H1 (cell line): ENCODE measurements at regions of chr7 and their contacts with region 1.

Region 1: GRCh38 chr7:157474689-157475088 is 137.9 kb downstream of the DNAJB6 start:
- DNase-seq: peak; percentile 46 to 88
- H3K4me3 ChIP-seq: no peak overlapping the region
- H3K27ac ChIP-seq: no peak overlapping the region
- H3K4me1 ChIP-seq: 0 out of 7 replicates have a peak, but pooled peaks cover 0 to 3% (median 0%) of the 10 kb centered on the region in 4 experiments
- H3K27me3 ChIP-seq: no peaks in the 10 kb centered on the region; a peak in 1 of 7 replicates
- CTCF ChIP-seq: peak; percentile 69 to 84 (median 78)
- EP300 ChIP-seq: no peak
- POLR2A ChIP-seq: no peak
- RAD21 ChIP-seq: peak; percentile 51 to 64

Region 2: GRCh38 chr7:157404845-157405481 is 69.7 kb before region 1 on chr7:
- CTCF ChIA-PET with region 1: no interaction called
- POLR2A ChIA-PET with region 1: no interaction called
- DNase-seq: no peak
- H3K4me3 ChIP-seq: no peak overlapping the region
- H3K27ac ChIP-seq: no peak overlapping the region
- H3K4me1 ChIP-seq: peaks cover 0 to 3% (median 0%) of the 10 kb centered on the region in 4 experiments; a peak in 2 of 7 replicates
- H3K27me3 ChIP-seq: no peaks in the 10 kb centered on the region
- CTCF ChIP-seq: no peak
- EP300 ChIP-seq: no peak
- POLR2A ChIP-seq: no peak
- RAD21 ChIP-seq: no peak

Region 3: DNA sequence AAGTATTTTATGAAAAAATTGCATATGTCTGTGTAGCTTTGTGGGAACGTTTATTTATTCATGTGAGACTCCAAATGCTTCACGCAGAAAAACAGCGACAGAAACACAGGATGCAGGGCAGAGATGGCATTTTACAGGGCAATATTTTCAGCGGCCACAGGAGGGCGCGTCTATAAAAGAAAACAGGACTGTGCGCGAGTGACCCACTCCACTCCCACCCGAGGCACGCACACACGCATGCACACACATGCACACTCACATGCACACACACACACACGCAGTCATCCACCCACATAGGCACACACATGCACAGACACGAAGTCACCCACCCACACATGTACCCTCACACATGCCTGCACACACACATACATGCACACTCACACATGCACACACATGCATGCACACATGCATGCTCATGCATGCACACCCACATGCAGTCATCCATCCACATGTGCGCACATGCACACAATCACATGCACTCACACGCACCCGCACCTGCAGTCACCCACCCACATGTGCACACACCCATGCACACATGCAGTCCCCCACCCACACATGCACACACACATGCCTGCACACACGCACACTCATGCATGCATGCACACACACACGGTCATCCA is 41.6 kb before region 1 on chr7:
- CTCF ChIA-PET with region 1: interaction called, 22 read pairs
- POLR2A ChIA-PET with region 1: interaction called, 3 read pairs
- DNase-seq: peak in 1 of 2 experiments; percentile 77
- H3K4me3 ChIP-seq: peak overlapping the region in 1 of 4 experiments; percentile 49; a peak in 3 of 8 replicates
- H3K27ac ChIP-seq: no peak overlapping the region
- H3K4me1 ChIP-seq: peaks cover 0 to 11% (median 7%) of the 10 kb centered on the region in 4 experiments; a peak in 6 of 7 replicates
- H3K27me3 ChIP-seq: no peaks in the 10 kb centered on the region
- CTCF ChIP-seq: peak in 2 of 3 experiments; percentile 67 to 74; a peak in 3 of 4 replicates
- EP300 ChIP-seq: peak in 1 of 2 experiments; percentile 12; a peak in 1 of 3 replicates
- POLR2A ChIP-seq: no peak
- RAD21 ChIP-seq: peak; percentile 74 to 77

Region 4: DNA sequence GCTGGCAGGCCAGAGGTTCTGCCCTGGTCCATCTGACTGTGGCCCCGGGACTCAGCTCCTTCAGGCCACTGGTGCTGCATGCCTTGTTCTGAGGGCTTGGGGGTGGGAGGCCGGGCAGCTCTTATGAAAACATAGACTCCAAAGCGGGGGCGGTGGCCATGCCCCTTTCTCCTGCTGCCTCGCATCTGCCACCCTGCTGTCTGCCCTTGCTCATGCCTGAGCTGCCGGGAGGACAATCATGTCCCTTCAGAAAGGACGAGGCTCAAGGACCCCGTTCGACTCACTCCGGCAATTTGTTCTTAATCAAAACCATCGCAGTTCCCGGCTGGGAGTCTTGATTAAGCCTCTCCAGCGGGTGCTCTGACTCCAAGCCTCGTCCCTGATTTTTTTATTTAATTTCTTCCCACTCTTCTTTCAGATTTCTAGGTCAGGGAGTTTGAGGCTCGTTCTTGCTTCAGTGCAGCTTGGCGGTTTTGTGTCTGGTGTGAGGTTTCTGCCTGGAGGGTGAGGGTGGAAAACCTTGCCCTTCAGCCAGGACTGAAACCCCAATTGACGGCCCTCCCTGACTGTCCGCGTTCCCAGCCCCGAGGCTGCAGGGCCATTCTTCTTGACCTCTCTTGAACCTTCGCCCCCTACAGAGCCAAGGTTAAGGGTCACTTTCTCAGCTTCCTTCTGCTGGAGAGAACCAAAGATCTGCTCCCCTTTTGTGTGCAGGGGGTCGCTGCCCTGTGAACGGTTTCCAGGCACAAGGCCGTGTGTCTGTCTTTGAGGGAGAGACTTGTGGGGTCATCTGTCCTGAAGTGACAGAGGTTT is 17.0 kb before region 1 on chr7:
- CTCF ChIA-PET with region 1: interaction called, 12 read pairs
- POLR2A ChIA-PET with region 1: no interaction called
- DNase-seq: peak in 1 of 2 experiments; percentile 42
- H3K4me3 ChIP-seq: no peak overlapping the region
- H3K27ac ChIP-seq: no peak overlapping the region
- H3K4me1 ChIP-seq: peaks cover 0 to 3% (median 0%) of the 10 kb centered on the region in 4 experiments; a peak in 1 of 7 replicates
- H3K27me3 ChIP-seq: no peaks in the 10 kb centered on the region; a peak in 3 of 7 replicates
- CTCF ChIP-seq: no peak
- EP300 ChIP-seq: no peak
- POLR2A ChIP-seq: no peak
- RAD21 ChIP-seq: no peak

Region 5: GRCh38 chr7:157485361-157485831 is 10.7 kb after region 1 on chr7:
- CTCF ChIA-PET with region 1: interaction called, 26 read pairs
- POLR2A ChIA-PET with region 1: no interaction called
- DNase-seq: no peak
- H3K4me3 ChIP-seq: no peak overlapping the region
- H3K27ac ChIP-seq: no peak overlapping the region
- H3K4me1 ChIP-seq: no peaks in the 10 kb centered on the region
- H3K27me3 ChIP-seq: peaks cover 0 to 3% (median 0%) of the 10 kb centered on the region in 4 experiments; a peak in 1 of 7 replicates
- CTCF ChIP-seq: no peak
- EP300 ChIP-seq: no peak
- POLR2A ChIP-seq: no peak
- RAD21 ChIP-seq: 0 out of 4 replicates have a peak, but pooled peaks of 1 of the 2 experiments have one; percentile 1

Region 6: GRCh38 chr7:157490457-157490912 is 15.8 kb after region 1 on chr7:
- CTCF ChIA-PET with region 1: interaction called, 26 read pairs
- POLR2A ChIA-PET with region 1: no interaction called
- DNase-seq: no peak
- H3K4me3 ChIP-seq: no peak overlapping the region
- H3K27ac ChIP-seq: no peak overlapping the region
- H3K4me1 ChIP-seq: no peaks in the 10 kb centered on the region
- H3K27me3 ChIP-seq: no peaks in the 10 kb centered on the region
- CTCF ChIP-seq: no peak
- EP300 ChIP-seq: no peak
- POLR2A ChIP-seq: no peak
- RAD21 ChIP-seq: no peak

Region 7: DNA sequence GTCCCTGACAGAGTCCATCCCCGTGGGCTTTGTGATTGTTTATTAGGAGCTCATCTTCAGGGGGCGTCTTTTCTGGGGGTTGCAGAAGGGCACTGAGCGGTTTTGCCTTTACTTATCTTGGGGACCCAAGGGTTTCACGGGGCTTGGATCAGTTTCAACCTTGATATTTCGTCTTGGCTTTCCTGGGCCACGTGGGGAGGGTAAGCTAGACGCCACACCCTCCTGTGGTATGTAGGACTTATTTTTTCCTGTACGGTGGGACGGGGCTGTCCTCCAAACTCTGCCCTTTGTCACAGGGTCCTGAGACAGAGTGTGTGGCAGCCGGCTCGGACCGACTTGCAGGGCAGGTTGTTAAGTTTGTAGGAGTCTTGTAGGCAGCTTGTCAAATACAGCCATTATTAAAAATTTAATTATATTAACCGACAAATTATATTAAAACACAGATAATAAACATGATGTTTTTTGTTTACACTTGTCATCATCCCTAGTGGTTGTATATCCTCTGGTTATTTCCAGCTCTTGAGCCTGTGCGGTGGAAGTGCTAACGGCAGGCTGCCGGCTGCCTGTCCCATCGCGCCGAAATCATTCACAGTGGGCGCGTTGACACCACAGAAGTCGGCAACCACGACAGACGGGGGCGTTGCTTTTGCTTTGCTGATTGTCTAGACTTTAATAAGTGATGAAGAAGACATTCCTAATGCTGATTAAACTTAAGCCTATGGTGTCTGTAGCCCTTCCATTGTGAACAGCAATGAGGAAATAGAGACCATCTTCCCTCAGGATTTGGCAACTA is 55.3 kb after region 1 on chr7:
- CTCF ChIA-PET with region 1: interaction called, 11 read pairs
- POLR2A ChIA-PET with region 1: no interaction called
- DNase-seq: peak in 1 of 2 experiments; percentile 7
- H3K4me3 ChIP-seq: no peak overlapping the region
- H3K27ac ChIP-seq: no peak overlapping the region
- H3K4me1 ChIP-seq: no peaks in the 10 kb centered on the region; a peak in 2 of 7 replicates
- H3K27me3 ChIP-seq: no peaks in the 10 kb centered on the region; a peak in 1 of 7 replicates
- CTCF ChIP-seq: no peak
- EP300 ChIP-seq: no peak
- POLR2A ChIP-seq: no peak
- RAD21 ChIP-seq: no peak

Region 8: DNA sequence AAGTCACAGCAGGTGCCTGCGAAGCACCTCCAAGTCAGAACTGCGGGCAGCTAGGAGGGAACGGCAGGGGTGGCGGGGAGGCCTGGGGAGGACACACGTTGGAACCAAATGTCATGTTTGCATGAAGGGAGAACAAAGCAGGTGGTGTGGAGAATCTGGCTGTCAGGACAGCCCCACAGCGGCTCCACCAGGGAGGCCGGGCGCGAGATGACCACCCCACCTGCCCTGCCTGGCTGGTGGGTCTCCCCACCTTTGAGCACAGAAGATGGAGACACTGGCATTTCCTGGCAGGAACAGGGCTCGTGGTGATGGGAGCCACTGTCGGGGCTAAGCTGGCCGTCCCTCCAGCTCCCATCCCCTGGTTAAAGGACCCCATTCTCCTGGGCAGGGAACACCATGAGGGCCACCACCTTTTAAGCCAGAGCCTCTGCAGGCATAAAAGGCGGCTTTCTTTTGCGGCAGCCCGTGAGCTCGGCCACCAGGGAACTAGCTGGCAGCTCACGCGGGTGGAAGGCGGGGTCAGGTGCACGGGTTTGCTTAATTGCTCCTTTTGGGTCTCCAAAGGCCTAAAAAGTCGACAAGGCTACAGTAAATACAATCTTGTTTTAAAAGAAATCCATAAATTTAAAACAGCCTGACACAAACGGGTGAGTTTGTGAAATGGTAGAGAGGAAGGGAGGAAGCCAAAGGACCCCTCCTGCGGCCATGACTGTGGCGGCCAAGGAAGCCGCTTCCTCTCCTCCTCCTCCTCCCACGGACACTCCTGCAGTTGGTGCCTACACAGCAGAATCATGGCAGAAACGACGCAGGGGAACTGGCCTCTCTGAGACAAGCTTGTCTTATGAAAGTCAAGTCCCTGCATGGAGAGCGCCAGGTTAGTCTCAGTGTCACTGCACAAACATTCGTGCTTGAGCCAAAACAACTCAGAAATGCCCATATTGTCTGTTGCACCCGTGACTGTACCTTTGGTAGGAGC is 75.9 kb after region 1 on chr7:
- CTCF ChIA-PET with region 1: interaction called, 11 read pairs
- POLR2A ChIA-PET with region 1: no interaction called
- DNase-seq: no peak
- H3K4me3 ChIP-seq: no peak overlapping the region
- H3K27ac ChIP-seq: no peak overlapping the region
- H3K4me1 ChIP-seq: no peaks in the 10 kb centered on the region
- H3K27me3 ChIP-seq: no peaks in the 10 kb centered on the region; a peak in 1 of 7 replicates
- CTCF ChIP-seq: no peak
- EP300 ChIP-seq: no peak
- POLR2A ChIP-seq: no peak
- RAD21 ChIP-seq: no peak